Posterior vena cava (tissue), 2 donors: ENCODE measurements at regions of chr15 and their contacts with region 1.

Region 1: GRCh38 chr15:71316911-71317310 is 201.6 kb downstream of the THSD4 start:
- DNase-seq: no peak

Region 2: DNA sequence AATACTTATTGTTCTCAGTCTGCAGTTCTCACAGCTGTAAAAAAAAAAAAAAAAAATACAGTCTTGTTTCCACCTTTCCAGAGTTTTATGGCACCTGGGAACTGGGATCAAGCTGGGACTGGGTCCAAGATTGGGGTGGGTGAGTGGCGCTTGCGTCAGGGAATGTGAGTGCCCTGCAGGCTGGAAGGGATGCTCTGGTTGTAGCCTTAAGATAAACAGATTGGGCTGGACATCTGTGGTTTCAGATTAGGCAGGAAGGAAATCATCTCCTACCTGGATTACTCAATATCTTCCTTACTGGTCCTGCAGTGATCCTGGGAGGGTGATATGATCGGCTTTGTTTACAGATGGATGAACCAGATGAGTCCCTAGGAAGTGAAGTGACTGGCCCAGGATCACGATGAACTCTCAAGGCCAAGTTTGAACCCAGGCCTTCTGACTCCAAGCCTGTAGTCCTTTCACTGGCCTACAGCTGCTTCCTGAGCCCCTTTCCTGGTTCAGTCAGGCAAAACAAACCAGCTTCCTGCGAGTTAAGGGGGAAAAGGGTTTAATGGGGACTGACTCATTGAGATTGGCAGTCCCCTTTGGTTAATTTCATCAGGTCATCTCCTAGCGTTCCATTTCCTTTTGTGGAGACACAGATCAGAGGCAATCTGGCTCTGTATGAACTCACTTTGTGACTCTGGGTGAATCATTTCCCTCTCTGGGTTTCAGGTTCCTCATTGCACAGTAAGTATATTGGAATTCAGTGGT is 21.8 kb before region 1 on chr15:
- intact Hi-C with region 1: no loop called
- DNase-seq: no peak

Region 3: GRCh38 chr15:71353171-71353570 is 36.3 kb after region 1 on chr15:
- intact Hi-C with region 1: loop called in 1 of 2 experiments (anchors 1 kb)
- DNase-seq: no peak